Left ventricle myocardium superior (tissue), 1 donor: ENCODE measurements at regions of chr1 and their contacts with region 1.

Region 1: GRCh38 chr1:170729225-170730002 is 65.5 kb downstream of the PRRX1 start:
- DNase-seq: no peak
- ATAC-seq: peak; percentile 92

Region 2: GRCh38 chr1:170660281-170660713 is 69.1 kb before region 1 on chr1:
- intact Hi-C with region 1: no loop called
- DNase-seq: no peak
- ATAC-seq: no peak

Region 3: GRCh38 chr1:170670802-170671628 is 58.4 kb before region 1 on chr1:
- intact Hi-C with region 1: loop called (anchors 10 kb)
- DNase-seq: peak; percentile 79
- ATAC-seq: peak; percentile 55

Region 4: GRCh38 chr1:170692866-170693575 is 36.4 kb before region 1 on chr1:
- intact Hi-C with region 1: no loop called
- DNase-seq: no peak
- ATAC-seq: peak; percentile 78